Natural killer cell (primary cell): ENCODE measurements at regions of chr15 and their contacts with region 1.

Region 1: DNA sequence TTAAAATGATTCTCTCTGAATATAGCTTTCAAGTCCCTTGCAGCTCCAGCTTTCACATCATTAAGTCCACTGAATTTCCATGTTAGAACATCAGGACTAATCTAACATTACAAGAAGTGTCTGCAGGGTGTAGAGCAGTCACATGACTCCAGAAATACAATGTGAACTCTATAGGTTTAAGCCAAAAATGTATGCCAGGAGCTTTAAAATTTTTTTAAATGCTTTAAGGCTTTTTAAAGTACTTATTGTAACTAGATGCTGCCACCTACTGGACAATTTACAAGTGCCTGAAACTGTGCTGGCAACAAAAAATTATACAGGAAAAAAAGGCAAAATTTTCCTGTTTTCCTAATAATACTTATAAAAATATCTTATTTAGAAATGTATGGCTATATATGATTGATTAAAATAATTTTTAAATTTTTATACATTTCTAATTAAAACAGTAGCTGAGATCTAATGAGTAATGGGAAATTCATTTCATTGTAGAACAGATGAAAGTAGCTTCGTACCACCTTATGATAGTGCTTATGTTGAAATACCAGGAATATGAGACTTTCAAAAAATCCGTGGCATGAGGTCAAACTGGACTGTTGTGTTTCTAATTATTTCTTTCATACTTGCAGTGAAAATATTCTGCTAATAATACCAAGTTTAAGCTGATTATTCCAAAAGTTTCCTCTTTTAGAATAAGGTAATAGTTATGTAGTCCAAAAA is 25.7 kb downstream of the FSIP1 start:
- DNase-seq: peak in 1 of 2 donors; percentile 79
- ATAC-seq: peak in 1 of 3 donors; percentile 53
- H3K4me3 ChIP-seq: no peak overlapping the region
- H3K4me3 Mint-ChIP-seq: no peak overlapping the region
- H3K27ac ChIP-seq: no peak overlapping the region
- H3K27ac Mint-ChIP-seq: no peak overlapping the region
- H3K4me1 ChIP-seq: no peaks in the 10 kb centered on the region
- H3K4me1 Mint-ChIP-seq: no peaks in the 10 kb centered on the region
- H3K27me3 ChIP-seq: no peaks in the 10 kb centered on the region
- H3K27me3 Mint-ChIP-seq: no peaks in the 10 kb centered on the region
- CTCF ChIP-seq: peak; percentile 88

Region 2: DNA sequence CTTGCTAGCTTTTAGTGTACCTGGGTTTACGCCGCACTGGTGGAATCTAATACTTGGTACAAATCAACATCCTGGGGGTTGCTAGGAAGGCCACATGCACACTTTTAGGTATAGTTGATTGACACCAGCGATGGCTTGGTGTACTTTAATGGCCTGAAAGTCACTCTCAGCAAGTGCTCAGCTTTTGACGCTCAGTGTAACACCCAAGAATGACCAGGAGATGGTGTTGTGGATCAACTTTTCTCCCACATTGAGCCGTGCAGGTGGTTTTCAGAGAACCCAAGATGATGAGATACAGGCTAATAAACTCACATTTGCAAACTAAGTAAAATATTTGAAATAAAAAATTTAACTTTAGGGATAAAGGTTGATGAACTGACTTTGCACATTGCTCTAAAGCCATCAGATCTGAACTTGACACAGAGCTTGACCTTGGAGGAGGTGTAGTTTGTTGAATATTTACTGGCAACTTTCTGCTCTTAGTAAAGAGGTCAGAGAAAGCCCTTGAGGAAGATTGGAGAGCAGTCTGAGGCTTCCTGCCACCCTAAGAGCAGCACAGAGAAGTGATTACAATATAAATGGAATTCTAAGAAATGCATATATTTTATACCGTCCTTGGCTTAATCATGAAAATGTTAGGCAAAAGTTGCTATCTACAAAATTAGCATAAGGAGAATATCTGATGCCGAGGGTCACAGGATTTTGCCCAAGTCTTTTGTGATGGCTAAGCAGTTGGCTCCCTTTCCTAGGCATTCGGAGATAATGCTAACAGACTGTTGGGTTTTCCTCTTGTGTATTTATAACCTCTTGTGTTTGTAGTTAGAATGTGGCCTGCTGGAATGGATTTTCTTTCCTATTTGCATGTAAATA is 1048.9 kb before region 1 on chr15:
- intact Hi-C with region 1: loop called (anchors 5 kb)
- DNase-seq: peak in 1 of 2 donors; percentile 77
- ATAC-seq: peak; percentile 66 to 90 (median 87)
- H3K4me3 ChIP-seq: no peak overlapping the region
- H3K4me3 Mint-ChIP-seq: no peak overlapping the region
- H3K27ac ChIP-seq: no peak overlapping the region
- H3K27ac Mint-ChIP-seq: no peak overlapping the region
- H3K4me1 ChIP-seq: no peaks in the 10 kb centered on the region
- H3K4me1 Mint-ChIP-seq: no peaks in the 10 kb centered on the region
- H3K27me3 ChIP-seq: no peaks in the 10 kb centered on the region
- H3K27me3 Mint-ChIP-seq: peaks cover 10 to 11% of the 10 kb centered on the region in 2 donors
- CTCF ChIP-seq: peak; percentile 73

Region 3: GRCh38 chr15:38817427-38818156 is 939.4 kb before region 1 on chr15:
- intact Hi-C with region 1: loop called (anchors 2 kb)
- DNase-seq: peak; percentile 77 to 84
- ATAC-seq: peak; percentile 88 to 100 (median 97)
- H3K4me3 ChIP-seq: no peak overlapping the region
- H3K4me3 Mint-ChIP-seq: no peak overlapping the region
- H3K27ac ChIP-seq: no peak overlapping the region
- H3K27ac Mint-ChIP-seq: no peak overlapping the region
- H3K4me1 ChIP-seq: peaks cover 3% of the 10 kb centered on the region
- H3K4me1 Mint-ChIP-seq: no peaks in the 10 kb centered on the region
- H3K27me3 ChIP-seq: no peaks in the 10 kb centered on the region
- H3K27me3 Mint-ChIP-seq: peaks cover 0 to 13% of the 10 kb centered on the region in 2 donors
- CTCF ChIP-seq: peak; percentile 99

Region 4: GRCh38 chr15:39580117-39580484 is 176.9 kb before region 1 on chr15:
- intact Hi-C with region 1: loop called (anchors 1 kb)
- DNase-seq: peak; percentile 86 to 94
- ATAC-seq: peak; percentile 93 to 96 (median 94)
- H3K4me3 ChIP-seq: peak overlapping the region; percentile 47
- H3K4me3 Mint-ChIP-seq: peak overlapping the region; percentile 78
- H3K27ac ChIP-seq: no peak overlapping the region
- H3K27ac Mint-ChIP-seq: peak overlapping the region; percentile 37 to 76
- H3K4me1 ChIP-seq: peaks cover 30% of the 10 kb centered on the region
- H3K4me1 Mint-ChIP-seq: peaks cover 29 to 48% of the 10 kb centered on the region in 2 donors
- H3K27me3 ChIP-seq: peaks cover 5% of the 10 kb centered on the region
- H3K27me3 Mint-ChIP-seq: peaks cover 8 to 23% of the 10 kb centered on the region in 2 donors
- CTCF ChIP-seq: peak; percentile 98

Region 5: GRCh38 chr15:39686000-39686613 is 70.9 kb before region 1 on chr15:
- intact Hi-C with region 1: loop called (anchors 1 kb)
- DNase-seq: peak in 1 of 2 donors; percentile 74
- ATAC-seq: peak in 2 of 3 donors; percentile 69 to 74
- H3K4me3 ChIP-seq: no peak overlapping the region
- H3K4me3 Mint-ChIP-seq: no peak overlapping the region
- H3K27ac ChIP-seq: no peak overlapping the region
- H3K27ac Mint-ChIP-seq: peak overlapping the region; percentile 16 to 44
- H3K4me1 ChIP-seq: peaks cover 3% of the 10 kb centered on the region
- H3K4me1 Mint-ChIP-seq: peaks cover 12 to 27% of the 10 kb centered on the region in 2 donors
- H3K27me3 ChIP-seq: no peaks in the 10 kb centered on the region
- H3K27me3 Mint-ChIP-seq: no peaks in the 10 kb centered on the region
- CTCF ChIP-seq: peak; percentile 96

Region 6: GRCh38 chr15:39704689-39705088 is 52.3 kb before region 1 on chr15:
- intact Hi-C with region 1: no loop called
- DNase-seq: no peak
- ATAC-seq: no peak
- H3K4me3 ChIP-seq: no peak overlapping the region
- H3K4me3 Mint-ChIP-seq: no peak overlapping the region
- H3K27ac ChIP-seq: no peak overlapping the region
- H3K27ac Mint-ChIP-seq: no peak overlapping the region
- H3K4me1 ChIP-seq: no peaks in the 10 kb centered on the region
- H3K4me1 Mint-ChIP-seq: peaks cover 0 to 4% of the 10 kb centered on the region in 2 donors
- H3K27me3 ChIP-seq: no peaks in the 10 kb centered on the region
- H3K27me3 Mint-ChIP-seq: no peaks in the 10 kb centered on the region
- CTCF ChIP-seq: no peak

Region 7: GRCh38 chr15:39828374-39828931 is 71.5 kb after region 1 on chr15:
- intact Hi-C with region 1: no loop called
- DNase-seq: no peak
- ATAC-seq: no peak
- H3K4me3 ChIP-seq: no peak overlapping the region
- H3K4me3 Mint-ChIP-seq: no peak overlapping the region
- H3K27ac ChIP-seq: no peak overlapping the region
- H3K27ac Mint-ChIP-seq: no peak overlapping the region
- H3K4me1 ChIP-seq: no peaks in the 10 kb centered on the region
- H3K4me1 Mint-ChIP-seq: no peaks in the 10 kb centered on the region
- H3K27me3 ChIP-seq: peaks cover 6% of the 10 kb centered on the region
- H3K27me3 Mint-ChIP-seq: peaks cover 22 to 41% of the 10 kb centered on the region in 2 donors
- CTCF ChIP-seq: no peak